Transverse colon (tissue), 4 donors: ENCODE measurements at regions of chr7 and their contacts with region 1.

Region 1: GRCh38 chr7:10939911-10940703 is 33.6 kb upstream of the PHF14 start:
- DNase-seq: peak; percentile 88
- H3K4me3 ChIP-seq: peak overlapping the region; percentile 57 to 97 (median 79)
- H3K27ac ChIP-seq: peak overlapping the region; percentile 86 to 96 (median 95)
- H3K4me1 ChIP-seq: peaks cover 0 to 39% (median 21%) of the 10 kb centered on the region in 4 donors
- H3K27me3 ChIP-seq: no peaks in the 10 kb centered on the region
- CTCF ChIP-seq: no peak
- EP300 ChIP-seq: no peak
- POLR2A ChIP-seq: peak; percentile 91

Region 2: GRCh38 chr7:10977113-10977512 is 37.0 kb after region 1 on chr7:
- in situ Hi-C with region 1: no loop called
- intact Hi-C with region 1: loop called (anchors 5 kb)
- DNase-seq: no peak
- H3K4me3 ChIP-seq: no peak overlapping the region
- H3K27ac ChIP-seq: no peak overlapping the region
- H3K4me1 ChIP-seq: peaks cover 6 to 18% (median 7%) of the 10 kb centered on the region in 4 donors
- H3K27me3 ChIP-seq: no peaks in the 10 kb centered on the region
- CTCF ChIP-seq: no peak
- EP300 ChIP-seq: no peak
- POLR2A ChIP-seq: no peak

Region 3: DNA sequence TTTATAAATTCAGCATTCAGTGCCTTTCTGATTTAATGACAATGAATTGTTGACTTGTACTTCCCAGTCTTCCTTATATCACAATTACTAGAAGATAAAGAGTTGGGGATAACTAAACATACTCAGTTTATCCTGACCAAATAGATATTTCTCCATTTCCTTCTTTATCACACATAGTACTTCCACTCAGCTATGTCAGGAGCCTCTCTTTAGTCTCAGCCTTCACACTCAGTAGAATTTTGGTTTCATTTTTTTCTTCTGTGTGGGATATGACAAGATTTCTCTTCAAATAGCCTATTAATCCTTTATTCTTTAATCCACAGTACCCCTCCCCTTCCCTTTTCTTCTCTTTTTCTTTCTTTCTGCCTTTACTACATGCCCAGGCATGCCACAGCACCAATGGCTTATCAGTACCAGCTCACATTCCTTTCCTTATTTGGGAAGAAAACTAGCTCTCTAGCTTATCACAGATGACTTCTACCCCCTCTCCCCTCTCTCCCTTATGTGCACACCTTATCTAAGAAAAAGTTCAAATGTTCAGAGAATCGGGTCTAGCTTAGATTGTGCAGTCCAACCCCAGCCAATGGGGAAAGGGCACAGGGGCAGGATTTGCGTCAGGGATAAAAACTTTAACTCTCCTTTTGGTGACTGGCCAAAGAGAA is 142.6 kb after region 1 on chr7:
- in situ Hi-C with region 1: no loop called
- intact Hi-C with region 1: no loop called
- DNase-seq: no peak
- H3K4me3 ChIP-seq: no peak overlapping the region
- H3K27ac ChIP-seq: no peak overlapping the region
- H3K4me1 ChIP-seq: peaks cover 0 to 15% (median 2%) of the 10 kb centered on the region in 4 donors
- H3K27me3 ChIP-seq: no peaks in the 10 kb centered on the region
- CTCF ChIP-seq: no peak
- EP300 ChIP-seq: no peak
- POLR2A ChIP-seq: no peak